Esophagus muscularis mucosa (tissue), 4 donors: ENCODE measurements at regions of chr13 and their contacts with region 1.

Region 1: GRCh38 chr13:39144941-39145533 is 106.8 kb downstream of the NHLRC3 start:
- DNase-seq: no peak
- H3K4me3 ChIP-seq: peak overlapping the region in 2 of 4 donors; percentile 8 to 13
- H3K27ac ChIP-seq: peak overlapping the region in 1 of 4 donors; percentile 18
- H3K4me1 ChIP-seq: peaks cover 3 to 6% (median 4%) of the 10 kb centered on the region in 4 donors
- H3K27me3 ChIP-seq: no peaks in the 10 kb centered on the region
- CTCF ChIP-seq: peak; percentile 72 to 82 (median 75)
- EP300 ChIP-seq: no peak
- POLR2A ChIP-seq: no peak

Region 2: DNA sequence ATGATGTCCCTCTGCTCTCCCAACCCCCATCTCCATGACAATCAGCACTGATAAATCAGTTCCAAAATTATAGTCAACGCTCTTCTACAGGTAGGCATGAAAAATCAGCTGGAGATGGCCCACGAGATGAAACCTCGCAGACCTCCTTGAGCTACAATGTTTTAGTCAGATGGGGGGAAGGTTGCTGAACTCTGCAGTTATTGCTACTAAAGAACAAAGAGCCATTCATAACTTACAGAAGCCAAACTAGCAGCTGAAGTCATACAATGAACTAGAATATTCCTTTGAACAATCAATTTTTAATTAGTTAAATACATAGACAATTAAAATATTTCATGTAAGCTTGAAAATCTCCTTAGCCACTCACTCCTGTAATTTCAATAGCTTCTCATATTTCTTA is 72.4 kb after region 1 on chr13:
- intact Hi-C with region 1: no loop called
- DNase-seq: no peak
- H3K4me3 ChIP-seq: no peak overlapping the region
- H3K27ac ChIP-seq: no peak overlapping the region
- H3K4me1 ChIP-seq: no peaks in the 10 kb centered on the region
- H3K27me3 ChIP-seq: no peaks in the 10 kb centered on the region
- CTCF ChIP-seq: no peak
- EP300 ChIP-seq: no peak
- POLR2A ChIP-seq: no peak

Region 3: GRCh38 chr13:39263033-39263432 is 118.0 kb after region 1 on chr13:
- intact Hi-C with region 1: loop called (anchors 2 kb)
- DNase-seq: no peak
- H3K4me3 ChIP-seq: no peak overlapping the region
- H3K27ac ChIP-seq: no peak overlapping the region
- H3K4me1 ChIP-seq: peaks cover 11 to 14% (median 12%) of the 10 kb centered on the region in 4 donors
- H3K27me3 ChIP-seq: no peaks in the 10 kb centered on the region
- CTCF ChIP-seq: peak; percentile 64 to 72 (median 68)
- EP300 ChIP-seq: no peak
- POLR2A ChIP-seq: no peak